ENCODE measurements at regions of chr16 and their contacts with region 1.

Region 1: DNA sequence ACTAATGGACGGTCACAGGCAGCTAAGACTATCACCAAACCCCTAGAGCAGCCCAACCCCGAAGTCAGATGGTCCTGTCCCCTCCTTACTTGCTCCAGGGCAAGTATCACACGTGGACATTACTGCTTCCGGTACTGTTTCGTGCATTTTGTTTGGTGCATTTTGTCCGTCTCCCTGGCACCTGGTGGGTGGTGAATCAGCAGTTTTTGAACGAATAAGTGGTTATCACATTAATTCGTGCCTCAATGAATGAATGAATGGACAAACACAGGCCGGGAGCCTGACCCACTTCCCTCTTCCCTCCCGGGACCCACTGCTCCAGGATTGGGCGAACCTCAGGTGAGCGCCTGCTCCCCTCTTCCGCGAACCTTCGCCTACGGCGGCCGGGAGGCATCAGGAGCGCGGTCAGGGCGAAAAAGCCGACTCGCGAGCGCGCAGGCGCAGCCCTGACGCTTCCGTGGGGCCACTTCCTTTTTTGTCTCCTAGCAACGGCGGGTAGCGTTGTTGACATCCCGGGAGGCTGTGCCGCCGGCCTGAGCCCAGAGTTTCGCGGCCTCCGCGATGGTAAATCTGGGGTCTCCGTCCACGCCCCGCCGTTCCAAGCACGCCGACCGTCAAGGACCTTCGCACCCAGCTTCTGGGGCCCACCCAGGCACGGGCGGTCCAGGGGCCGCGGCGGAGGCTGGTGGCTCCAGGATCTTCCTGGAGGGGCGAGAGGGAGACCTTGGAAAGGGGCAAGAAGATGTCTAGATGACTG is at the start of gene DYNLRB2:
- DNase-seq: peak; percentile 94
- H3K4me3 Mint-ChIP-seq: peak within 1 kb of the TSS; percentile 95
- H3K27ac Mint-ChIP-seq: peak within 1 kb of the TSS; percentile 97
- H3K4me1 Mint-ChIP-seq: peaks cover 16% of the 10 kb centered on the region
- H3K27me3 Mint-ChIP-seq: no peaks in the 10 kb centered on the region
- total RNA-seq, gene DYNLRB2: not detected

Region 2: GRCh38 chr16:80518436-80518835 is 22.3 kb before region 1 on chr16:
- CTCF ChIA-PET with region 1: no interaction called
- intact Hi-C with region 1: loop called (anchors 1 kb)
- DNase-seq: peak; percentile 71
- H3K4me3 Mint-ChIP-seq: no peak overlapping the region
- H3K27ac Mint-ChIP-seq: no peak overlapping the region
- H3K4me1 Mint-ChIP-seq: peaks cover 21% of the 10 kb centered on the region
- H3K27me3 Mint-ChIP-seq: peaks cover 20% of the 10 kb centered on the region

Region 3: DNA sequence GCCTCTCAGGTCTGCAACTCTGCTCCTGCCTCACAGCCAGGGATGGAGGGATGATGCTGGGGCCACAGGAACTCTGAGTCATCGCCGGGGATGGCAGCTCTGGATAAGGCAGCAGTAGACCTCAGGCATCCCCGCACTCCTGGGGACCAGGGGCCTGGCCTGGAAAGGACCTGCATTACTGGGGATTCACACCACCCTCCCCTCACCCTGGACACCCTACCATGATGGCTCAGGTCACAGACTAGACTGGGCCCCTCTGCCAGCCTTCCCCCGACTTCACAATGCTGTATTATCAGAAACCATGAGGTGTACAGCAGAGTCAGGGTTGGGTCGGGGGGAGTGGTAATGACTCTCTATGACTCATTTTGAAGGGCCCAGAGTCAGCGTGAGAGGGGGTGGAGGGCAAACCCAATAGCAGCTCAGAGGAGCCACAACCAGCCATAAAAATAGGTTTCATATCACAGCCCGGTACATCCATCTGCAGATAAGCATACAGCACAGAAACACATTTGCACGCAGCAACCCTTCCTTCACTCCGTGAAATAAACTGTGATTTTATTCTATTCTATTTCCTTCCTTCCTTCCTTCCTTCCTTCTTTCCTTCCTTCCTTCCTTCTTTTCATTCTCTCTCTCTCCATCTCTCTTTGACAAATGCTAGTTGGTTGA is 28.9 kb after region 1 on chr16:
- CTCF ChIA-PET with region 1: interaction called, 4 read pairs
- intact Hi-C with region 1: loop called (anchors 1 kb)
- DNase-seq: peak; percentile 91
- H3K4me3 Mint-ChIP-seq: no peak overlapping the region
- H3K27ac Mint-ChIP-seq: peak overlapping the region; percentile 43
- H3K4me1 Mint-ChIP-seq: peaks cover 30% of the 10 kb centered on the region
- H3K27me3 Mint-ChIP-seq: no peaks in the 10 kb centered on the region

Region 4: DNA sequence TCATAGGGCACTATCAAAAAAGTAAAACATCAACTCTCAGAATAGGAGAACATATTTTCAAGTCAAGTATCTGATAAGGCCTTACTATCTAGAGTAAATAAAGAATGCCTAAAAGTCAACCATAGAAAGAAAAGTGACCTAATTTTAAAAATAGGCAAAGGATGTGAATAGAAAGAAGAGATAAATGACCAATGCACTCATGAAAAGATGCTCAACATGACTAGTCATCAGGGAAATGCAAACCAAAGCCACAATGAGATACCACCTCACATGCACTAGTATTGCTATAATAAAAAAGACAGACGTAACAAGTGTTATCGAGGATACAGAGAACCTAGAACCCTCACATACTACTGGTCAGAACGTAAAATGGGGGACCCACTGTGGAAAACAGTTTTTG is 90.9 kb after region 1 on chr16:
- CTCF ChIA-PET with region 1: no interaction called
- intact Hi-C with region 1: no loop called
- DNase-seq: no peak
- H3K4me3 Mint-ChIP-seq: no peak overlapping the region
- H3K27ac Mint-ChIP-seq: no peak overlapping the region
- H3K4me1 Mint-ChIP-seq: no peaks in the 10 kb centered on the region
- H3K27me3 Mint-ChIP-seq: no peaks in the 10 kb centered on the region

Region 5: GRCh38 chr16:80656711-80657150 is 116.0 kb after region 1 on chr16:
- CTCF ChIA-PET with region 1: no interaction called
- intact Hi-C with region 1: loop called (anchors 5 kb)
- DNase-seq: peak; percentile 49
- H3K4me3 Mint-ChIP-seq: peak overlapping the region; percentile 73
- H3K27ac Mint-ChIP-seq: peak overlapping the region; percentile 68
- H3K4me1 Mint-ChIP-seq: peaks cover 20% of the 10 kb centered on the region
- H3K27me3 Mint-ChIP-seq: no peaks in the 10 kb centered on the region

Region 6: GRCh38 chr16:80671281-80671849 is 130.7 kb after region 1 on chr16:
- CTCF ChIA-PET with region 1: no interaction called
- intact Hi-C with region 1: loop called (anchors 5 kb)
- DNase-seq: no peak
- H3K4me3 Mint-ChIP-seq: no peak overlapping the region
- H3K27ac Mint-ChIP-seq: no peak overlapping the region
- H3K4me1 Mint-ChIP-seq: peaks cover 19% of the 10 kb centered on the region
- H3K27me3 Mint-ChIP-seq: no peaks in the 10 kb centered on the region

Region 7: GRCh38 chr16:81767987-81768592 is 1227.4 kb after region 1 on chr16:
- CTCF ChIA-PET with region 1: no interaction called
- intact Hi-C with region 1: no loop called
- DNase-seq: no peak
- H3K4me3 Mint-ChIP-seq: no peak overlapping the region
- H3K27ac Mint-ChIP-seq: no peak overlapping the region
- H3K4me1 Mint-ChIP-seq: no peaks in the 10 kb centered on the region
- H3K27me3 Mint-ChIP-seq: no peaks in the 10 kb centered on the region

Measured in activated naive CD4-positive, alpha-beta T cell treated with anti-CD3 and anti-CD28 coated beads for 36 hours (primary cell).